Activated CD8-positive, alpha-beta T cell treated with anti-CD3 and anti-CD28 coated beads, Interleukin-2, amount 10 ng/mL, durations not matched to agents 7 days and 5 days (primary cell): ENCODE measurements at regions of chr20 and their contacts with region 1.

Region 1: DNA sequence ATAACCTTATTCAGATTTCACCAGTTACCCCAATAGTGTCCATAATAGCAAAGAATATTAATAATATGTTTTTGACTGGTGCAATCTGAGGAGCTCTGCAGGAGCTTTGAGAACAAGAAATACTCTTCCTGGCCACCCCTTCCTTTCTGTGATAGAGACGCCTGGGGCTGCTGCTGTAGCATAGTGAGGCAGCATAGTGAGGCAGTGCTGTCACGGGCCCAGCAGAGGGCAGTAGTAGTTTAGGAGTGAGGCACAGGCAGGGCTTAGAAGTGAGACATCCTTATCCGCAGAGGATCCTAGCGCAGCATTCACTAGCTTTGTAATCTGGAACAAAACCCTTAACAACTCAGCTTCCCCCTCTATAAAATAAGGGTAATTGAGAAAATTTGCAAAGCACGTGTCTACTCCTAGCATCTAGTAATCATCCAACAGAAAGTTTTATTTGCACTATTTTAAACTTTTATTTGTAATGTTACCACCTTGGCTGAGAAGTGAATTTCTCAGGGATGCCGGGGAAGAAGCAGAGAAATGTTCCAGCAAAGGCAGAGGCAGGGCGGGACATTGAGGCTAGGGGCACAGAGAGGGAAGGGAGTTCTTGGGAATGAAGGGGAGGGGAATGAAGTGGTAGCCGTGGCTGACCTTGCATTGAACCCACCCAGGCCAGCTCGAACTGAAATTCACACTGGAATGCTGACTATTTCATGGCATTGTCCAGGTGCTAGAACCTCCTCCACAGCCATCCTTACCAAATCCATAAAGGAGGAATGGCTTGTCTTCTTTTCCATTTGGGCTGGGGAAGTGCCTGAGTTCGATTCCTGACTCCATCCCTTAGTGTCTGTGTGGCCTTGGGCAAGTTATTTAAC is 78.8 kb downstream of the CDS2 start:
- DNase-seq: peak; percentile 79
- ATAC-seq: peak; percentile 97
- H3K4me3 Mint-ChIP-seq: no peak overlapping the region
- H3K27ac Mint-ChIP-seq: no peak overlapping the region
- H3K4me1 Mint-ChIP-seq: no peaks in the 10 kb centered on the region
- H3K27me3 Mint-ChIP-seq: no peaks in the 10 kb centered on the region

Region 2: GRCh38 chr20:5078399-5078958 is 127.1 kb before region 1 on chr20:
- CTCF ChIA-PET with region 1: no interaction called
- POLR2A ChIA-PET with region 1: no interaction called
- DNase-seq: peak; percentile 93
- ATAC-seq: peak; percentile 98
- H3K4me3 Mint-ChIP-seq: peak overlapping the region; percentile 76
- H3K27ac Mint-ChIP-seq: peak overlapping the region; percentile 97
- H3K4me1 Mint-ChIP-seq: peaks cover 56% of the 10 kb centered on the region
- H3K27me3 Mint-ChIP-seq: no peaks in the 10 kb centered on the region

Region 3: GRCh38 chr20:5215672-5216304 is 10.2 kb after region 1 on chr20:
- CTCF ChIA-PET with region 1: interaction called, 19 read pairs
- POLR2A ChIA-PET with region 1: no interaction called
- DNase-seq: no peak
- ATAC-seq: no peak
- H3K4me3 Mint-ChIP-seq: no peak overlapping the region
- H3K27ac Mint-ChIP-seq: no peak overlapping the region
- H3K4me1 Mint-ChIP-seq: no peaks in the 10 kb centered on the region
- H3K27me3 Mint-ChIP-seq: no peaks in the 10 kb centered on the region

Region 4: GRCh38 chr20:5222919-5223634 is 17.5 kb after region 1 on chr20:
- CTCF ChIA-PET with region 1: interaction called, 47 read pairs
- POLR2A ChIA-PET with region 1: no interaction called
- DNase-seq: peak; percentile 75
- ATAC-seq: peak; percentile 77
- H3K4me3 Mint-ChIP-seq: no peak overlapping the region
- H3K27ac Mint-ChIP-seq: no peak overlapping the region
- H3K4me1 Mint-ChIP-seq: no peaks in the 10 kb centered on the region
- H3K27me3 Mint-ChIP-seq: no peaks in the 10 kb centered on the region

Region 5: GRCh38 chr20:5448449-5449118 is 243.0 kb after region 1 on chr20:
- CTCF ChIA-PET with region 1: interaction called, 21 read pairs
- POLR2A ChIA-PET with region 1: no interaction called
- DNase-seq: peak; percentile 68
- ATAC-seq: peak; percentile 55
- H3K4me3 Mint-ChIP-seq: no peak overlapping the region
- H3K27ac Mint-ChIP-seq: no peak overlapping the region
- H3K4me1 Mint-ChIP-seq: no peaks in the 10 kb centered on the region
- H3K27me3 Mint-ChIP-seq: peaks cover 28% of the 10 kb centered on the region